ENCODE measurements at regions of chr1 and their contacts with region 1.

Region 1: DNA sequence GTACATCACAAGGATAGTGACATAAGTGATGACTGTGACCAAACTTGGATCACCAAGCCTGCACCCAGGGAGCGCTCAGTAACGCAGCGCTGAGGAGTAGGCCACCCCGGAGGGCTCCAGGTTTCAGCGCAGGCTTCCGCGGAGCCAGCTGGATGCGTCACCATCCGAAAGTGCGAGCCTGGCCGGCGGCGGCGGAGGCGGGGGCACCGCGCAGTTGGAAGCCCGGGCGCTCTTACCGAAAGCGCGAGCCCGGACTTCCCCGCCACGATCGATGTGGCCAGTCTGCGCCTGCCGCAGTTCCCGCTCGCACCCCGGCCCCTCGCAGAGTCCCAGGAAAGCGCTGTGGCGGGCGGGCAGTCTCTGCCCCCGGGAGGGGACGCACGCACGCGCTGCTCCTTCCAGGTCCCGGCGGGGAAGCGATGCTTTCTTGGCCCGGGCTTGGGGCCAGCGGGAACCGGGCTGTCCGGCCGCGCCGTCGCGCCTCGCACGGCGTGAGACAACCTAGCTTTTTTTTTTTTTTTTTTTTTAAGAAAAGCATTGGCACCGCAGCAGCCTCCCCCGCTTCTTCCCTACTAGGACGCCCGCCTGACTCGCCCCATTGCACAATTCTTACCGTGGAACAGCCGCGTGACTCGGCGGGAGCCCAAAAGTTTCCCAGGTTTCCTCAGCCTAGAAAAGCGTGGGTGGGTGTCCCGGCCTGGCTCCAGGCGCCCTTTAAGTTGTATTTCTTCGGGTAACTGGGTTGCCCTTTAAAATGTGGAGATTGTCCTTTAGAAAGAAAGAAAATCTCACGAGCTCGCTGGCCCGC is 36.4 kb upstream of the JAK1 start:
- DNase-seq: peak; percentile 62 to 96
- H3K4me3 ChIP-seq: peak overlapping the region; percentile 67 to 80
- H3K27ac ChIP-seq: peak overlapping the region; percentile 98 to 99
- H3K4me1 ChIP-seq: peaks cover 4 to 9% of the 10 kb centered on the region in 2 donors
- H3K27me3 ChIP-seq: no peaks in the 10 kb centered on the region
- CTCF ChIP-seq: no peak

Region 2: DNA sequence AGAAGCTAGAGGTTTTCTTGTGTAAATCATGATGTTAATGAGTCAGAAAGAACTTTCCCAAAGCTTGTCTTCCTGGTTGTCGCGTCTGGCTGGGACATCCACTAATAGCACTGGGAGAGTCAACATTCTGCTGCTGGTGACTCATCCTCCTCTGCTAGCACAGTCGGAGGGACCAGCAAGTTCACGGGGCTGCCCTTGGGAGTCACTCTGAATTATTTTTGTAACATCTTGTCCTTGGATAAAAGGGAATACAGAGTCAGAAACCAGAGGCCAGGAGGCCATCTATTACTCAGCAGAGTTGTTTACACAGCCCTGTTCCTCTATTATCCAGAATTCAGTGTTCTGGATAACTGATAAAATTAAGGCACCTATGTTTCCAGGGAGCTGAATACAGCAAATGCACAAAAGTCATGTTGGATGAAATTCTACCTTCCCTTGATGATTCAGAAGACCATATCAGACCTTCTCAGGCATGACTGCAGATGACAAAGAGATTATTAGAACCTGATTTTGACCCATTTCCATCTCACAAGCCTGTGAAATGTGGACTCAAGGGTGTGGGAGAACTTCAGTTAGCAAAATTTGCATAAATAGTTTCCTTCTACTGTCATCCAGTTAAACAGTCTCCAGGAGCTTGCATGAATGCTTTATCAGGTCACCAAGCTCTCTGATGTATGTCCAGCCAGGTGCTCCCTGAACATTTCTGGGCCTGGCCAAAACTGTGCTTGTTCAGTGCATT is 104.4 kb before region 1 on chr1:
- intact Hi-C with region 1: loop called (anchors 2 kb)
- DNase-seq: peak; percentile 92 to 96
- H3K4me3 ChIP-seq: peak overlapping the region; percentile 24 to 31
- H3K27ac ChIP-seq: peak overlapping the region; percentile 79 to 86
- H3K4me1 ChIP-seq: peaks cover 4 to 23% of the 10 kb centered on the region in 2 donors
- H3K27me3 ChIP-seq: no peaks in the 10 kb centered on the region
- CTCF ChIP-seq: no peak

Region 3: GRCh38 chr1:64933296-64934070 is 69.2 kb before region 1 on chr1:
- intact Hi-C with region 1: loop called (anchors 2 kb)
- DNase-seq: peak; percentile 22 to 91
- H3K4me3 ChIP-seq: peak overlapping the region; percentile 22 to 46
- H3K27ac ChIP-seq: peak overlapping the region; percentile 78 to 79
- H3K4me1 ChIP-seq: peaks cover 0 to 29% of the 10 kb centered on the region in 2 donors
- H3K27me3 ChIP-seq: no peaks in the 10 kb centered on the region
- CTCF ChIP-seq: no peak

Region 4: DNA sequence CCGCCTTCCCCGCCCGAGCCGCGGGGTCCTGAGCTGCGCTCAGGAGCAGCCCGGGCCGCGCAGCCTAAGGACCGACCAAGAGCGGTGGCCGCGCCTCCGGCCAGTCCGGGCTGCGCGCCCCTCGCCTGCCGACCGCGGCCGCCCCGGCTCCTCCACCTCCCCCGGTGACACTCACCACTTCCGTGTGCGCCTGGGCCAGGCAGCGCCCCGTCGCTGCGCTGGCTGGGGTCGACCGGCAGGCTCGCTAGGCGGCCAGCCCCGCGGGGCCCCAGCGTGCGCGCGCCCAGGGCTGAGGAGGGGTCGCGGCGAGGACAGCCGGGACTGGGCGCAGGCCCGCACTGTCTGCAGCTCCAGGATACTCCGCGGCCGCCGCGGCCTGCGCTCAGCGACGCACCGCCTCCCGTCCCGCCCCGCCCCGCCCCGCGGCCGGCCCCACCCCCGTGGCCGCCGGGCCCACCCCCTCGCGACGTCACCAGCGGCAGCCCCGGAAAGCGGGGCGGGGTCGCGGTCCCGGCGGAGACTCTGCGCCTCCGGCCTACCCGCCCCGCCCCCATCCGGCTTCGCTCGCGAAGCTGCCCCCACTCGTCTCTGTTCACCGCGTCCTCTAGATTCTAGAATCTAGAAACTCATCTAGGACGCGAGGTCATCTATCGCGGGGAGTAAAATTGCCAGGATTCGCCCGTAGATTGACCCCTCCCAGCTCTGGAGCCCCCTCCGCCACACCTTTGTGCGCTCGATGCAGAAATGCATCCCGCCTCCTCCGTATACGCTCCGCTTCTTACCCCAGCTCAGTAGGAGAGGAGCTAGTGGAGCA is 36.3 kb before region 1 on chr1 and contains the start of gene JAK1:
- intact Hi-C with region 1: loop called (anchors 1 kb)
- DNase-seq: peak in 1 of 2 donors; percentile 87
- H3K4me3 ChIP-seq: peak within 1 kb of the TSS; percentile 76 to 98
- H3K27ac ChIP-seq: peak within 1 kb of the TSS; percentile 94 to 97
- H3K4me1 ChIP-seq: peaks cover 0 to 6% of the 10 kb centered on the region in 2 donors
- H3K27me3 ChIP-seq: no peaks in the 10 kb centered on the region
- CTCF ChIP-seq: no peak
- total RNA-seq, gene JAK1: 53.5 TPM

Region 5: DNA sequence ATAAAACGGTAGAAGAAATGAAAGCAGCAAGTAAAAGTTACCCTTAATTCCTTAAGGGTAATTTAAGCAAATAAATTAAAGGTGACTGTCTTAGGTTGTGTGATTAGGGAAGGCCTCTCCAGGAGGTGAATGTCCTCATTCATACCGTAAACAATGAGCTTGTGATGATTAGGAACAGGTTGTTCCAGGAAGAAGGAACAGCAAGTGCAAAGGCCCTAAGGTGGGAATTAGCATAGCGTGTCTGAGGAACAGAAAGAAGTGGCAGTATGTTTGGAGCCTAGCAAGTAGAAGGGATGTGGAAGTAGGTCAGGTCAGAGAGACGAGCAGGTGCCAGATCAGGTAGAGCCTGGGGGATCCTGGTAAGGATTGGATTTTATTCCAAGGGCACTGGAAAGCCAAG is 150.9 kb after region 1 on chr1:
- intact Hi-C with region 1: no loop called
- DNase-seq: no peak
- H3K4me3 ChIP-seq: no peak overlapping the region
- H3K27ac ChIP-seq: no peak overlapping the region
- H3K4me1 ChIP-seq: no peaks in the 10 kb centered on the region
- H3K27me3 ChIP-seq: no peaks in the 10 kb centered on the region
- CTCF ChIP-seq: no peak

Region 6: GRCh38 chr1:65332821-65333220 is 330.1 kb after region 1 on chr1:
- intact Hi-C with region 1: no loop called
- DNase-seq: no peak
- H3K4me3 ChIP-seq: no peak overlapping the region
- H3K27ac ChIP-seq: no peak overlapping the region
- H3K4me1 ChIP-seq: no peaks in the 10 kb centered on the region
- H3K27me3 ChIP-seq: no peaks in the 10 kb centered on the region
- CTCF ChIP-seq: no peak

Region 7: GRCh38 chr1:66095190-66095589 is 1092.5 kb after region 1 on chr1:
- intact Hi-C with region 1: no loop called
- DNase-seq: no peak
- H3K4me3 ChIP-seq: no peak overlapping the region
- H3K27ac ChIP-seq: no peak overlapping the region
- H3K4me1 ChIP-seq: no peaks in the 10 kb centered on the region
- H3K27me3 ChIP-seq: no peaks in the 10 kb centered on the region
- CTCF ChIP-seq: no peak

Measured in ascending aorta (tissue), 2 donors.